Endothelial cell of umbilical vein (primary cell): ENCODE measurements at regions of chr6 and their contacts with region 1.

Region 1: GRCh38 chr6:147774856-147775255 is 266.4 kb downstream of the SAMD5 start:
- DNase-seq: no peak
- H3K4me3 ChIP-seq: no peak overlapping the region
- H3K27ac ChIP-seq: no peak overlapping the region
- H3K4me1 ChIP-seq: no peaks in the 10 kb centered on the region
- H3K27me3 ChIP-seq: no peaks in the 10 kb centered on the region
- CTCF ChIP-seq: peak; percentile 16 to 32
- POLR2A ChIP-seq: no peak

Region 2: DNA sequence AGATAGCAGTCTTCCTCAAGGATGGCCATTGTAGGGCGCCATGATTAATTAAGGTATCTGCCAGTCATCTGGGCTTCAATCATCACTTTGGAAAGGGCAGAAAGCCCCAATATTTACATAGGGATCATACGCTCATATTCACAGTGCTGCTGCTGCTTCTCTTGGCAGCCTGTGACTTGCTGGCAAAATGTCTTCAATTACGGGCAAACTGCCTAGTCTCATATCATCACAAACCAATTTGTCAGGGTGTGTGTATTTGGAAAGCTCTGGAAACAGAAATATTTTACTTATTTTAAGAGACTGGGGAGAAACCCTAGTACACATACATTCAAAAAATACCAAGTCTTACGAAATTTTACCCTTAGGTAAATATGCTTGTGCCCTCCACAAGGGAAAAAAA is 188.8 kb before region 1 on chr6:
- CTCF ChIA-PET with region 1: no interaction called
- POLR2A ChIA-PET with region 1: no interaction called
- dilution Hi-C with region 1: no loop called
- intact Hi-C with region 1: no loop called
- DNase-seq: no peak
- H3K4me3 ChIP-seq: no peak overlapping the region
- H3K27ac ChIP-seq: no peak overlapping the region
- H3K4me1 ChIP-seq: no peaks in the 10 kb centered on the region
- H3K27me3 ChIP-seq: no peaks in the 10 kb centered on the region
- CTCF ChIP-seq: no peak
- POLR2A ChIP-seq: no peak

Region 3: GRCh38 chr6:147787417-147787816 is 12.6 kb after region 1 on chr6:
- CTCF ChIA-PET with region 1: interaction called, 7 read pairs
- POLR2A ChIA-PET with region 1: no interaction called
- dilution Hi-C with region 1: no loop called
- intact Hi-C with region 1: loop called (anchors 1 kb)
- DNase-seq: no peak
- H3K4me3 ChIP-seq: no peak overlapping the region
- H3K27ac ChIP-seq: no peak overlapping the region
- H3K4me1 ChIP-seq: no peaks in the 10 kb centered on the region
- H3K27me3 ChIP-seq: no peaks in the 10 kb centered on the region
- CTCF ChIP-seq: no peak
- POLR2A ChIP-seq: no peak

Region 4: DNA sequence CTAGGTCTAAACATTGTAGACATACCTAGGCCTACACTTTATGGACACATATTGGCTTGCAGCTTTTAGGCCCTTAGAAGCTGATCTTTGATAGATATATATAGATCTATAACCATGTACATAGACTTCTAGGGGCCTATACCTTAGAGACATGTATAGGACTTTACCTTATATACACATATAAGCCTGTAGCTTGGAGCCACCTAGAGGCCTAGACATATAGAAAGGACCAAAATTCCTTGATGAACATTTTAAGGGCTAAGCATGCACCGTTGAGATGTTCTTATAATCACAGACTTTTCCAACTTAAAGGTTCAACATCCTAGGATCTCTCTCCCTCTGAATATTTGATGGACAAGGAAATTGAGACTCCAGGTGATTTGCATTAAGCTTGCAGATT is 196.1 kb after region 1 on chr6:
- CTCF ChIA-PET with region 1: no interaction called
- POLR2A ChIA-PET with region 1: no interaction called
- dilution Hi-C with region 1: no loop called
- intact Hi-C with region 1: loop called (anchors 10 kb)
- DNase-seq: peak; percentile 14
- H3K4me3 ChIP-seq: no peak overlapping the region
- H3K27ac ChIP-seq: no peak overlapping the region
- H3K4me1 ChIP-seq: no peaks in the 10 kb centered on the region
- H3K27me3 ChIP-seq: no peaks in the 10 kb centered on the region
- CTCF ChIP-seq: peak in 1 of 2 donors; percentile 20
- POLR2A ChIP-seq: no peak